ENCODE measurements at regions of chr5 and their contacts with region 1.

Region 1: GRCh38 chr5:65041281-65042158 is 272.8 kb downstream of the CWC27 start:
- DNase-seq: peak; percentile 4 to 37
- H3K4me3 ChIP-seq: peak overlapping the region; percentile 8; the same call in 1 of the 2 replicates
- H3K27ac ChIP-seq: peak overlapping the region; percentile 55
- H3K4me1 ChIP-seq: peaks cover 23% of the 10 kb centered on the region
- H3K27me3 ChIP-seq: no peaks in the 10 kb centered on the region
- CTCF ChIP-seq: no peak

Region 2: DNA sequence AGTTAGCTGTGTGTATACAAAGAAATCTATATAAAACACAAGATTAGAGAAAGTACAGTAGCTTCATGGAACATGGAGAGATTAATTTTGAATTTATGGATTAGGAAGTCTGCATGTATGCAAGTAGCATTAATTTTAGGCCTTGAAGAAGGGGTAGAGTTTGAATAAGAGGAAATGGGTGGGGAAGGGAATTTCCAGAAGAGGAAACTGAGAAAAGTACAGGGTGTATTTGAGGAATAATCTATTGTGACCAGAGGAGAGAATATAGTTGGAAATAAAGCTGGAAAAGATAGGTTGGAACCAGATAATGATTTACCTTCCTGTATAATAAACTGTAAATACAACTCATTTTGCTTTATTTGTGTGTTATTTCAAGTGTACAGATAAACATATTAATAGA is 219.2 kb before region 1 on chr5:
- CTCF ChIA-PET with region 1: no interaction called
- POLR2A ChIA-PET with region 1: no interaction called
- intact Hi-C with region 1: no loop called
- DNase-seq: no peak
- H3K4me3 ChIP-seq: no peak overlapping the region
- H3K27ac ChIP-seq: no peak overlapping the region
- H3K4me1 ChIP-seq: no peaks in the 10 kb centered on the region
- H3K27me3 ChIP-seq: no peaks in the 10 kb centered on the region
- CTCF ChIP-seq: no peak

Region 3: GRCh38 chr5:64946739-64947430 is 94.6 kb before region 1 on chr5:
- CTCF ChIA-PET with region 1: no interaction called
- POLR2A ChIA-PET with region 1: no interaction called
- intact Hi-C with region 1: no loop called
- DNase-seq: no peak
- H3K4me3 ChIP-seq: no peak overlapping the region
- H3K27ac ChIP-seq: no peak overlapping the region
- H3K4me1 ChIP-seq: no peaks in the 10 kb centered on the region
- H3K27me3 ChIP-seq: no peaks in the 10 kb centered on the region
- CTCF ChIP-seq: no peak

Region 4: DNA sequence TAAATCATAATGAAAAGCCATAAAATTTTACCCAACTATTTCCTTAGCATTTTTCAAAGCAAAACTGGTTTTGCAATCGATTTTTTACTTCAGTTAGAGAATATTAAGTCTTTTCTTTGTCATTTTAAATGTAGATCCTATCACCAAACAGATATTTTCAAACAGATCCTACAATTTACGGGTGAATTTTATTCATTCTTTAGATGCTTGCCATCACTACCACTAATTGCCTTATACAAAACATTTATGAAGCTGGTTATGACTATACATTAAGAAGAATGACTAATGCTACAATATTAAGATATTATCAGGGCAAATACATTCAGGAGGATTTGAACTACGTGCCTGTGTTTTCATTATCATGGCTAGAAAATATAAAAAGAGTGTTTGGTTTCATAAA is 75.9 kb before region 1 on chr5:
- CTCF ChIA-PET with region 1: no interaction called
- POLR2A ChIA-PET with region 1: no interaction called
- intact Hi-C with region 1: loop called (anchors 2 kb)
- DNase-seq: no peak
- H3K4me3 ChIP-seq: no peak overlapping the region
- H3K27ac ChIP-seq: no peak overlapping the region
- H3K4me1 ChIP-seq: no peaks in the 10 kb centered on the region
- H3K27me3 ChIP-seq: no peaks in the 10 kb centered on the region
- CTCF ChIP-seq: no peak

Measured in PC-9 (cell line).